Psoas muscle (tissue), 8 donors: ENCODE measurements at regions of chr16 and their contacts with region 1.

Region 1: GRCh38 chr16:57519796-57520360 is 16.5 kb downstream of the CCDC102A start:
- DNase-seq: peak; percentile 80 to 88
- ATAC-seq: peak; percentile 81 to 96 (median 87)
- H3K4me3 ChIP-seq: no peak overlapping the region
- H3K27ac ChIP-seq: no peak overlapping the region
- H3K4me1 ChIP-seq: no peaks in the 10 kb centered on the region
- H3K27me3 ChIP-seq: no peaks in the 10 kb centered on the region
- CTCF ChIP-seq: peak; percentile 97

Region 2: DNA sequence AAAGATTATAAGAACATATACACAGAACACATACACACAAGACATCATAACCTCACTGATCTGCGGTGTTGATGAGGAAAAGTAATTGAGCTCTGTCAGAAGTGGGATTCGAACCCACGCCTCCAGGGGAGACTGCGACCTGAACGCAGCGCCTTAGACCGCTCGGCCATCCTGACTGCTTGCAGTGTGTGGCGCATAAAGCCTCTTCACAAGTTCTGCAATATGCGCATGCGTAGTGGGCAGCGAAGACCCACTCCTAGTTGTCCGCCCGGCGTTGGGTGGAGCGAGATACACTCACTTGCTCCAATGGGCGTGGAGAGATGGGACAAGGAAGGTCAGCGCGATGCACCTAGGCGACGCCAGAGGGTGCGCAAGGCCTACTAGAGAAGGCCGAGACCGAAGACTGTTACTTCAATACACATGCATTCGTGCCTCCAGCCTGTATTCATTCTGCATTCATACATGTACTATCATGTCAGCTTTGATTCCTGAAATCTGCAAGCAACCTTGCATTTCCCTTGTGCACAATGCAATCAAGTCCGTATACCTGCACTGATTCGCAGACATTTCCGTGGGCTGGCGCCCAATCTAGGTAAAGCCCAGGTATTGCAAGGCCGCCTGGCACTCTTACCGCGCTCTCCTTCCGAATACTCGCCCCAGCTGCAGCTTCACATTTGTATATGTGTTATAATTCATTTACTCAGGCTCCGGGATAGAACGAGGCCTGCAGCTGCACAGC is 219.3 kb before region 1 on chr16:
- intact Hi-C with region 1: loop called (anchors 2 to 5 kb)
- DNase-seq: peak; percentile 98 to 99
- ATAC-seq: peak; percentile 94 to 95 (median 94)
- H3K4me3 ChIP-seq: peak overlapping the region; percentile 62
- H3K27ac ChIP-seq: peak overlapping the region; percentile 84
- H3K4me1 ChIP-seq: peaks cover 15% of the 10 kb centered on the region
- H3K27me3 ChIP-seq: no peaks in the 10 kb centered on the region
- CTCF ChIP-seq: peak; percentile 96

Region 3: GRCh38 chr16:57413301-57413730 is 106.6 kb before region 1 on chr16:
- intact Hi-C with region 1: loop called (anchors 2 to 5 kb)
- DNase-seq: no peak
- ATAC-seq: no peak
- H3K4me3 ChIP-seq: no peak overlapping the region
- H3K27ac ChIP-seq: no peak overlapping the region
- H3K4me1 ChIP-seq: peaks cover 4% of the 10 kb centered on the region
- H3K27me3 ChIP-seq: peaks cover 0 to 5% (median 0%) of the 10 kb centered on the region in 3 donors
- CTCF ChIP-seq: no peak

Region 4: DNA sequence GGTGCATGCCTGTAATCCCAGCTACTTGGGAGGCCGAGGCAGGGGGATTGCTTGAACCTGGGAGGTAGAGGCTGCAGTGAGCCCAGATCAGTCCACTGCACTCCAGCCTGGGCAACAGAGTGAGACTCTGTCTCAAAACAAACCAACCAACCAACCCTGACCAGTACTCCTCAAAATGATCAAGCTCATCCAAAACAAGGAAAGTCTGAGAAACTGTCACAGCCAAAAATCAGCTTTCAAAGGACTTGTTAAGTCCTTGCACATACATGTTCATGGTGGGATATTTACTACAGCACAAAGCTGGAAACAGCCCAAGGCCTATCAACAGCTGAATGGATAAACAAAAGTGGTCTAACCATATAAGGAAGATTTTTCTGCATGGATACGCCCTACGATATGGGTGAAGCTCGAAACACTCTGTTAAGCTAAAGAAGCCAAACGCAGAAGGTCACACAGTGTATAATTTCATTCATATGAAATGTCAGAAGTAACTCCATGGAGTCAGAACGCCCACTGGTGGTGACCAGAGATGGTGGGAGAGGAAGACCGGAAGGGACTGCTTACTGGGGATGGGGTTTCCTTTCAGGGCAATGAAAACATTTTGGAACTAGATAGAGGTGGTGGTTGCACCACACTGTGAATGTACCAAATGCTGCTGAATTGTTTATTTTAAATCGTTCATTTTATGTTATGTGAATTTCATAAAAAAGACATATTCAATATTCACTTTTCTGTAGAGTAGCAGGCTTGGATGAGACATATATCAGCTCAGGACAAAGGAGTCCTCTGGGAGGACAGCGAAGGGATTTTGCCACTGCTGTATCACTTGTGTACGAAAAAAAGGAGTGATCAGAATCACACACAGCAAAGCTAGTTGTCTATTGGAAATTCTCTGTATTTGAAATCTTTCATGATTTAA is 97.6 kb before region 1 on chr16:
- intact Hi-C with region 1: loop called (anchors 2 to 5 kb)
- DNase-seq: no peak
- ATAC-seq: peak in 2 of 4 donors; percentile 46 to 52
- H3K4me3 ChIP-seq: no peak overlapping the region
- H3K27ac ChIP-seq: no peak overlapping the region
- H3K4me1 ChIP-seq: peaks cover 14% of the 10 kb centered on the region
- H3K27me3 ChIP-seq: no peaks in the 10 kb centered on the region
- CTCF ChIP-seq: peak; percentile 48

Region 5: DNA sequence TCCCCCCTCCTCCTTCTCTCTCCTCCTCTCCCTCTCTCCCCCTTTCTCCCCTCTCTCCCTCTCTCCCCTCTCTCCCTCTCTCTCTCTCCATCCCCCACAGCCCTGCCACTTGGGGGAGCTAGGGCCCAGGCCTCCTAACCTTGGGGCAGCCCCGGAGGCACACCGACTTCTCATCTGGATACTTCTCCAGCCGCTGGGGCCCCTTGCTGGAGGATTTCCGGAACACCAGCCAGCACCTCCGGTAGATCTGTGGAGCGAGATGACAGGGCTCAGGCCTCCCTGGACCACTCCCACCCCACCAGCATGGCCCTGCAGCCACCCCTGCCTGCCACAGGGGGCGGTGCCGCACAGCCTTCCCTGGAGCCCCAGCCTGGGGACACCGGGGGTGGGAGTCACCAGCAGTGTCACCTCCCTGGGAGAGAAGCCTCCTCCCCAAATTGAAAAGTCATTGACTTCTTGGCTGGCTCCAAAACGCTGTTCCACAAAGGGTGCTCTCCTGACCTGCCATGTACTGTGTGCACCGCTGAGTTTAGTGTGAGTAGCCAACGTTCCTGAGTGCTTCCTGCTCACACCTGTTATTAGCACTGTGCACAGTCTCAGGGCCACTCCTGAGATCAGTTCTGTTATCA is 44.1 kb before region 1 on chr16:
- intact Hi-C with region 1: loop called in 1 of 2 experiments (anchors 5 kb)
- DNase-seq: peak in 1 of 2 donors; percentile 67
- ATAC-seq: peak in 3 of 4 donors; percentile 45 to 69 (median 61)
- H3K4me3 ChIP-seq: no peak overlapping the region
- H3K27ac ChIP-seq: no peak overlapping the region
- H3K4me1 ChIP-seq: peaks cover 6% of the 10 kb centered on the region
- H3K27me3 ChIP-seq: no peaks in the 10 kb centered on the region
- CTCF ChIP-seq: peak; percentile 32